ENCODE measurements at regions of chr21 and their contacts with region 1.

Region 1: GRCh38 chr21:41133896-41134522 is 34.0 kb upstream of the BACE2 start:
- DNase-seq: peak; percentile 49
- ATAC-seq: peak; percentile 85
- H3K4me3 ChIP-seq: no peak overlapping the region
- H3K27ac ChIP-seq: no peak overlapping the region
- H3K4me1 ChIP-seq: no peaks in the 10 kb centered on the region
- H3K27me3 ChIP-seq: peaks cover 1 to 3% of the 10 kb centered on the region in 2 experiments; a peak in 1 of 5 replicates
- CTCF ChIP-seq: peak; percentile 65
- EP300 ChIP-seq: no peak
- POLR2A ChIP-seq: no peak
- RAD21 ChIP-seq: no peak

Region 2: DNA sequence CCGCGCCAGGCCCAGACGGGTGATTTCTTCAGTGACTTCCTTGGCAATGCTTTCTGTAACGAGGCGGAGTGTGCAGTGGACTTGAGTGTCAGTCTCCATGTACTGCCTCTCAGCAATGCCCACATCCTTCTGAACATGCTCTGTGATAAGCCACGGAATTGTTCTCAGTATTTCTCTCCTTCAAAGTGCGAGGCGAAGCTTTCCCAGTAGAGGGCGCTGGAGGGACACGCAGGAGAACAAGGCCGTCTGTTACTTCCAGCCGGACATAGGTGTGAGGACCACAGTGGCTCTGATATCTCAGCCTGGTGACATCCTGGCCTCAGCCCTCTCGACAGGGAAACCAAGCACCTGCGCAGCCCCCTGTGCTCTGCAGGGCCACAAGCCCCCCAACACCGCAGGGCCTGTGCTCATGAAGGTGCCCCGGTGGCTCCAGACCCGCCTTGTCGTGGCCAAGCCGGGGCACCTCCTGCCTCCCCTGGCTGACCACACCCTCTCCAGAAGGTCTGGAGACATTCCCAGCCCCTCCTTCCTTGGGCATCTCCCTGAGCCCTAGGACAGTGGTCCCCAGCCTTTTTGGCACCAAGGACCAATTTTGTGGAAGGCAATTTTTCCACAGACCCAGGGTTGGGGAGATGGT is 12.1 kb before region 1 on chr21:
- CTCF ChIA-PET with region 1: interaction called, 7 read pairs
- POLR2A ChIA-PET with region 1: no interaction called
- in situ Hi-C with region 1: no loop called
- intact Hi-C with region 1: loop called (anchors 1 kb)
- DNase-seq: peak; percentile 70
- ATAC-seq: peak; percentile 98
- H3K4me3 ChIP-seq: no peak overlapping the region
- H3K27ac ChIP-seq: no peak overlapping the region
- H3K4me1 ChIP-seq: no peaks in the 10 kb centered on the region
- H3K27me3 ChIP-seq: peaks cover 0 to 8% of the 10 kb centered on the region in 2 experiments; a peak in 3 of 5 replicates
- CTCF ChIP-seq: peak; percentile 88
- EP300 ChIP-seq: no peak
- POLR2A ChIP-seq: no peak
- RAD21 ChIP-seq: no peak

Measured in HepG2 (cell line).